PC-9 (cell line): ENCODE measurements at regions of chr3 and their contacts with region 1.

Region 1: DNA sequence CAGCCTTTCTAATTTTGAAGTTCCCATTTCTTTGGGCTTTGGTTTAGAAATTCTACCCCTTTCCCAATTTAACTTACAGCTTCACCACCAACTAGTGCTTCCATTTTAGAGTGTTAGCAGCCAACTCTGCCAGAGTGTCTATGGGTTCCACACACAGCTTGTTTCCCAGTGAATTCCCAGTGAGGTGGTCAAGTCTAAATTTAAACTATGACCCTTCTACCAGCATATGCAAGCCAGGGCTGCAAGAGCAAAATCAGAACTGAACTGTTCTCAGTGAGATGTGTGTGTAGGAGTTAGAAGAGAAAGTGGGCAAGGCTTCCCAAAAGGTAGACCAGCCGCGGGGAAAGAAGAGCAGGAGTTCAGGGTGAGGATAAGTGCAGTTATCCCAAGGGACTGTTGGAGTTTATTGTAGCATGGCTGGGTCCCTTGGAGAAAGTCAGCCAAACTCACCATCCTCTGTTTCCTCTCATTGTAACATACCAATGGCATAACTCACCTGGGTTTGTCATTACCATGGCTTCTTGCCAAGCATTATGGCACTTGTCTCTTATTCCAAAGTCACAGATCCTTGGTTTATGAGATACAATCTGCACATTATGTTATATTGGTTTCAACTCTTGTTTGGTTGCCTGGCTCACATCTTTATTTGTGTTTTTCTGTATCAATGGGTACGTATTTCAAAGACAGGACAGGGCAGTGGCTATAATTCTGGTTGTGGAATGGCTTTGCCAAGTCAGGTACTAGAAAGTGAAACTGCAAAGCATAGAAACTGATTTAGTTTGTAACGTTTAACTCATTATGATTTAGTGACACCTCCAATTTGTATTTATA is 130.3 kb upstream of the UMPS start:
- DNase-seq: peak; percentile 68 to 87
- H3K4me3 ChIP-seq: no peak overlapping the region
- H3K27ac ChIP-seq: no peak overlapping the region
- H3K4me1 ChIP-seq: peaks cover 19% of the 10 kb centered on the region
- H3K27me3 ChIP-seq: no peaks in the 10 kb centered on the region
- CTCF ChIP-seq: no peak

Region 2: DNA sequence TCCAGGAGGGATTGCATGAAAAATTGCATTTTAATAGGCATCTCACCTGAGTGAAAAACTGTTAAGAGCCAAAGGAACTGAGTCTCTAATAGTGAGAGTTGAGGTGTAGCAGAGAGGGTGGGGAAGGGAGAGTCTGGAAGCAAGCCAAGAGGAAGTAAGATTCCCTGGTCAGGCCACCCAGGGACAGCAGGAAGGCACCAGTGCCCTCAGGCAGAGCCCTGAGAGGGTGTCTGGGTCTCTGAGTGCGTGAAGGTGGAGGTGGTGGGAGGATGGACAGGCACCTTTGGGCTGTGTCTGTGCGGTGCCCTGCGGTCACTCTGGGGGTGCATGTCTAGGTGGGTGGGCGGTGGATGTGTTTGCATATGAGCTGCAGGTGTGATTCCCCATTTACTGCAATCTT is 307.7 kb before region 1 on chr3:
- CTCF ChIA-PET with region 1: no interaction called
- POLR2A ChIA-PET with region 1: no interaction called
- intact Hi-C with region 1: no loop called
- DNase-seq: peak in 1 of 2 experiments; percentile 50
- H3K4me3 ChIP-seq: no peak overlapping the region
- H3K27ac ChIP-seq: no peak overlapping the region
- H3K4me1 ChIP-seq: no peaks in the 10 kb centered on the region
- H3K27me3 ChIP-seq: peaks cover 33% of the 10 kb centered on the region; the same call in 1 of the 2 replicates
- CTCF ChIP-seq: no peak

Region 3: GRCh38 chr3:124620600-124621063 is 20.6 kb after region 1 on chr3:
- CTCF ChIA-PET with region 1: no interaction called
- POLR2A ChIA-PET with region 1: no interaction called
- intact Hi-C with region 1: loop called (anchors 2 kb)
- DNase-seq: peak; percentile 44 to 65
- H3K4me3 ChIP-seq: no peak overlapping the region
- H3K27ac ChIP-seq: no peak overlapping the region
- H3K4me1 ChIP-seq: peaks cover 12% of the 10 kb centered on the region
- H3K27me3 ChIP-seq: no peaks in the 10 kb centered on the region
- CTCF ChIP-seq: no peak

Region 4: GRCh38 chr3:124627501-124627908 is 27.5 kb after region 1 on chr3:
- CTCF ChIA-PET with region 1: interaction called, 3 read pairs
- POLR2A ChIA-PET with region 1: no interaction called
- intact Hi-C with region 1: loop called (anchors 1 kb)
- DNase-seq: peak; percentile 39 to 58
- H3K4me3 ChIP-seq: no peak overlapping the region
- H3K27ac ChIP-seq: no peak overlapping the region
- H3K4me1 ChIP-seq: peaks cover 10% of the 10 kb centered on the region
- H3K27me3 ChIP-seq: no peaks in the 10 kb centered on the region
- CTCF ChIP-seq: no peak

Region 5: GRCh38 chr3:124682263-124682662 is 82.3 kb after region 1 on chr3:
- CTCF ChIA-PET with region 1: interaction called, 25 read pairs
- POLR2A ChIA-PET with region 1: no interaction called
- intact Hi-C with region 1: no loop called
- DNase-seq: no peak
- H3K4me3 ChIP-seq: no peak overlapping the region
- H3K27ac ChIP-seq: no peak overlapping the region
- H3K4me1 ChIP-seq: no peaks in the 10 kb centered on the region
- H3K27me3 ChIP-seq: peaks cover 9% of the 10 kb centered on the region; the same call in 1 of the 2 replicates
- CTCF ChIP-seq: no peak

Region 6: GRCh38 chr3:124741027-124741426 is 141.0 kb after region 1 on chr3:
- CTCF ChIA-PET with region 1: no interaction called
- POLR2A ChIA-PET with region 1: interaction called, 11 read pairs
- intact Hi-C with region 1: no loop called
- DNase-seq: no peak
- H3K4me3 ChIP-seq: no peak overlapping the region
- H3K27ac ChIP-seq: no peak overlapping the region
- H3K4me1 ChIP-seq: no peaks in the 10 kb centered on the region
- H3K27me3 ChIP-seq: no peaks in the 10 kb centered on the region
- CTCF ChIP-seq: no peak